Sigmoid colon (tissue), 7 donors: ENCODE measurements at regions of chrX and their contacts with region 1.

Region 1: DNA sequence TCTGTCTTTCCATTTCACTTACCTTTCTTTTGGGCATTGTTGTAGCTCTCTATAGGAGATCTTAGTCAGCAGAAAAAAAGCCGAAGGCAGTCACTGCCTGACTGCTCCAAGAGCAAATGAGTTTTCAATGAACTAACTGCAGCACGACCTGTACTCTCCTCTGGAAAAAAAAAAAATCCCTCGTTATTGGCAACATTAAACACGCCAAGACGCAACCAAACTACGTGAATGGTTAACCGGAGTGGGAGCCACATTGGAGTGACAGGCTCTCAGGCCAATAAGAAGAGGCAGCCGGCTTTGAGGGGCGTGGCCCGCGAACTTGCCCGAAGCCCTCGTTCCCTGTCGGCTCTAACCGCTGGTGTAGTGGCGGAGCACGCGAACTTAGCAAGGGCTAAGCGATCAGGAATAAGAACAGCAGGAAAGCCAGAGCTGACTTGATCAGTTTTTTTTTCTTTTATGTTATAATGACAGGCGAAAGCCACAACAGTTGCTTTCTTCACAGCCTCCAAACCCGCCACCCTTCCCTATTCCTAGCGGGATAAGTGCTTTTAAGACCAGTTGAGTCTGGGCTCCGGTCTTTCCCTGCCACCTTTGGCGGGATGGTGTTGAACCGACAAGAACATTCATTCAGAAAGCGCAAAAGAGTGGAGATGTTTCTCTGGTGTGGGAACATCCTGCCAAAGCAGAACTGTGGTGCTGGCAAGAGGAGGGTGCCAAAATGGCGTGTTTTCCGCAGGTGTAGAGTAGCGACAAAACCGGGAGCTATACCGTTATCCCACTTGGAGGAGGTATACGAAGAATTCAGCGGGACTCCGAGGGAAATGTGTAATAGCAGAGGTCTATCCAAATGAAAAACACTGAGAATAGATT is 80.0 kb downstream of the HMGN5 start:
- DNase-seq: peak; percentile 96
- H3K4me3 ChIP-seq: peak overlapping the region; percentile 35 to 54 (median 50)
- H3K27ac ChIP-seq: peak overlapping the region; percentile 72 to 80 (median 76)
- H3K4me1 ChIP-seq: peaks cover 0 to 5% (median 0%) of the 10 kb centered on the region in 4 donors
- H3K27me3 ChIP-seq: no peaks in the 10 kb centered on the region
- CTCF ChIP-seq: no peak
- EP300 ChIP-seq: no peak
- POLR2A ChIP-seq: no peak

Region 2: GRCh38 chrX:80808160-80808735 is 313.5 kb before region 1 on chrX:
- intact Hi-C with region 1: loop called (anchors 5 kb)
- DNase-seq: peak; percentile 86
- H3K4me3 ChIP-seq: peak overlapping the region; percentile 53 to 72 (median 68)
- H3K27ac ChIP-seq: peak overlapping the region; percentile 86 to 90 (median 88)
- H3K4me1 ChIP-seq: peaks cover 0 to 15% (median 0%) of the 10 kb centered on the region in 4 donors
- H3K27me3 ChIP-seq: no peaks in the 10 kb centered on the region
- CTCF ChIP-seq: no peak
- EP300 ChIP-seq: no peak
- POLR2A ChIP-seq: no peak

Region 3: GRCh38 chrX:81082649-81083048 is 39.1 kb before region 1 on chrX:
- intact Hi-C with region 1: no loop called
- DNase-seq: no peak
- H3K4me3 ChIP-seq: no peak overlapping the region
- H3K27ac ChIP-seq: no peak overlapping the region
- H3K4me1 ChIP-seq: no peaks in the 10 kb centered on the region
- H3K27me3 ChIP-seq: no peaks in the 10 kb centered on the region
- CTCF ChIP-seq: no peak
- EP300 ChIP-seq: no peak
- POLR2A ChIP-seq: no peak